Naive thymus-derived CD4-positive, alpha-beta T cell (primary cell): ENCODE measurements at regions of chr3 and their contacts with region 1.

Region 1: GRCh38 chr3:56923521-56924224 is 121.9 kb upstream of the ARHGEF3 start:
- DNase-seq: peak; percentile 21 to 85 (median 78)
- ATAC-seq: peak; percentile 89
- H3K4me3 ChIP-seq: peak overlapping the region; percentile 10
- H3K4me3 Mint-ChIP-seq: peak overlapping the region; percentile 52 to 82 (median 76)
- H3K27ac ChIP-seq: peak overlapping the region; percentile 82
- H3K27ac Mint-ChIP-seq: peak overlapping the region; percentile 86 to 100 (median 99)
- H3K4me1 ChIP-seq: peaks cover 61 to 77% of the 10 kb centered on the region in 2 donors
- H3K4me1 Mint-ChIP-seq: peaks cover 50 to 93% (median 84%) of the 10 kb centered on the region in 7 donors
- H3K27me3 ChIP-seq: no peaks in the 10 kb centered on the region
- H3K27me3 Mint-ChIP-seq: no peaks in the 10 kb centered on the region

Region 2: DNA sequence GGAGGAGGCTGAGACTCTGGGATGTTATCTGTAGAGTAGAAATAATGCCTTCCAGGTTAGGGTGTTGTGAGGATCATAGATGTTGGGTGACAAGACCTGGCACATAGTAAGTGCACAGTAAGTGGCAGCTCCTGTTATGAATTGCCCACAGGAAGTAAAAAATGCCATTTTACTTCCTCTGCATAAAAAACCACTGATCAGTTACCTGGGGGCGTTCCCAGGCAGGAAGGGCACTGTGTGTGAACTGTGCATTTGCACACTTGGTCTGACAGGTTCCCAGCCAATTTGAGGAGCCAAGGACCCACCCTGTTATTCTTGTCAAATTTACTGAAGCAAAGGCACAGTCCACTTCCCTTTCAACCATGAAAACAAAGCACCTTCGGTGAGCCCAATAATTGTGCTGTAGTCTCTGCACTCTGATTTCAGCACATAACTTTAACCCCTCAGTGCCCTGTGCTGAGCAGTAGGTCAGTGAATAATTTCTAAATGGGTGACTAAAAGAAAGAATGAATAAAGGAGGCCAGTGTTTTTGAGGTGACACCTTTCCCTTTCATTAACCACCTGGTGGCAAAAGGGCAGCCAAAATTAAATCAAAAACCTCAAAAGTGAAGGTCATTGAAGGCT is 36.2 kb before region 1 on chr3:
- CTCF ChIA-PET with region 1: interaction called, 11 read pairs
- POLR2A ChIA-PET with region 1: interaction called, 44 read pairs
- intact Hi-C with region 1: no loop called
- DNase-seq: peak in 5 of 9 donors; percentile 8 to 30 (median 17)
- ATAC-seq: peak; percentile 59
- H3K4me3 ChIP-seq: peak overlapping the region; percentile 0
- H3K4me3 Mint-ChIP-seq: peak overlapping the region; percentile 62 to 88 (median 74)
- H3K27ac ChIP-seq: peak overlapping the region; percentile 39
- H3K27ac Mint-ChIP-seq: peak overlapping the region; percentile 49 to 92 (median 86)
- H3K4me1 ChIP-seq: peaks cover 42 to 65% of the 10 kb centered on the region in 2 donors
- H3K4me1 Mint-ChIP-seq: peaks cover 49 to 91% (median 86%) of the 10 kb centered on the region in 7 donors
- H3K27me3 ChIP-seq: no peaks in the 10 kb centered on the region
- H3K27me3 Mint-ChIP-seq: no peaks in the 10 kb centered on the region

Region 3: GRCh38 chr3:56942523-56942922 is 18.9 kb after region 1 on chr3:
- CTCF ChIA-PET with region 1: no interaction called
- POLR2A ChIA-PET with region 1: interaction called, 4 read pairs
- intact Hi-C with region 1: loop called in 1 of 2 experiments (anchors 2 kb)
- DNase-seq: no peak
- ATAC-seq: no peak
- H3K4me3 ChIP-seq: no peak overlapping the region
- H3K4me3 Mint-ChIP-seq: peak overlapping the region; percentile 23 to 76 (median 64)
- H3K27ac ChIP-seq: peak overlapping the region; percentile 39
- H3K27ac Mint-ChIP-seq: peak overlapping the region; percentile 52 to 94 (median 65)
- H3K4me1 ChIP-seq: peaks cover 9 to 12% of the 10 kb centered on the region in 2 donors
- H3K4me1 Mint-ChIP-seq: peaks cover 14 to 34% (median 26%) of the 10 kb centered on the region in 7 donors
- H3K27me3 ChIP-seq: no peaks in the 10 kb centered on the region
- H3K27me3 Mint-ChIP-seq: peaks cover 0 to 4% (median 0%) of the 10 kb centered on the region in 5 donors